Sigmoid colon (tissue), 7 donors: ENCODE measurements at regions of chr11 and their contacts with region 1.

Region 1: DNA sequence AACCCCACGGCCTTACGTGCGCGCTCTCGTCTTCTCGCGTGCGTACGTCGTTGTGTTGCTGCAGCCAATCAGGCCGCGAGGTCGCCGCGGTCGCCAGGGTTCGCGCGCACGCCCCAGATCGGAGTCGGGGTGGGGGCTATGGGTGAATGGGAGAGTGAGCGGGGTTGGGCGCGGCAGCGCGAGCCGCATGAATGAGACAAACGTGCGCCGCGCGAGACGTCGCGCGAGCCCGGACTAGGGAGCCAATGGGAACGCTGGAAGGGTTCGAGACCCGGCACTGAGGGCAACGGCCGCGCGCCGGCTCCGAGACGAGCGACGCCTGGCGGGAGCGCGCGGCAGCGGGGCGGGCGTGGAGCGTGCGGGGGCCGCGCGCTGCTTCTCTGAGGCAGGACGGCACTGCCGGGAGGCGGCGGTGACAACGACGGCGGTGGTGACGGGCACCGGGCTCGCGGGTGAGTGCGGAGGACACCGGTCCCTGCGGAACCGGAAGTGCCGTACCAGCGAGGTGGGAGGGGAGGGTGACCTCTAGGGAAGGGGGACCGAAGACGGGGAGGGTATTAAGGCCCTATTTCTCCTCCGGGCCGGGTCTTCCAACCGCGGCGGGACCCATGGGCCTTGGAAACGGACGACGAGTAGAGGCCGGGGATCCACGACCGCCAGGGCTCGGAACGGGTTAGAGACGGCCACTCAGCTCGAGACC is at the start of gene ZDHHC5:
- DNase-seq: peak; percentile 100
- H3K4me3 ChIP-seq: peak within 1 kb of the TSS; percentile 67 to 98 (median 84)
- H3K27ac ChIP-seq: peak within 1 kb of the TSS; percentile 92 to 99 (median 98)
- H3K4me1 ChIP-seq: peaks cover 0 to 30% (median 28%) of the 10 kb centered on the region in 4 donors
- H3K27me3 ChIP-seq: no peaks in the 10 kb centered on the region
- CTCF ChIP-seq: peak in 1 of 4 experiments; percentile 54
- EP300 ChIP-seq: no peak
- POLR2A ChIP-seq: peak; percentile 37 to 63
- total RNA-seq, gene ZDHHC5: 25.3 to 34.3 (median 28.1) TPM

Region 2: GRCh38 chr11:57324886-57325734 is 342.8 kb before region 1 on chr11 and contains the start of gene TNKS1BP1:
- intact Hi-C with region 1: loop called (anchors 5 kb)
- DNase-seq: peak; percentile 99
- H3K4me3 ChIP-seq: peak within 1 kb of the TSS; percentile 71 to 90 (median 86)
- H3K27ac ChIP-seq: peak within 1 kb of the TSS; percentile 89 to 97 (median 94)
- H3K4me1 ChIP-seq: peaks cover 0 to 51% (median 47%) of the 10 kb centered on the region in 4 donors
- H3K27me3 ChIP-seq: no peaks in the 10 kb centered on the region
- CTCF ChIP-seq: peak in 1 of 4 experiments; percentile 9
- EP300 ChIP-seq: no peak
- POLR2A ChIP-seq: peak; percentile 72 to 75
- total RNA-seq, gene TNKS1BP1: 26.4 to 51.2 (median 37.8) TPM

Region 3: GRCh38 chr11:57712256-57713150 is 44.6 kb after region 1 on chr11 and contains the start of gene TMX2:
- intact Hi-C with region 1: loop called (anchors 5 kb)
- DNase-seq: peak; percentile 97
- H3K4me3 ChIP-seq: peak within 1 kb of the TSS; percentile 96 to 98 (median 96)
- H3K27ac ChIP-seq: peak within 1 kb of the TSS; percentile 89 to 97 (median 92)
- H3K4me1 ChIP-seq: peaks cover 0 to 42% (median 36%) of the 10 kb centered on the region in 4 donors
- H3K27me3 ChIP-seq: no peaks in the 10 kb centered on the region
- CTCF ChIP-seq: no peak
- EP300 ChIP-seq: no peak
- POLR2A ChIP-seq: peak; percentile 23 to 34
- total RNA-seq, gene TMX2: 29.1 to 47.8 (median 40.7) TPM

Region 4: GRCh38 chr11:57761301-57762234 is 93.7 kb after region 1 on chr11 and contains the start of gene CTNND1:
- intact Hi-C with region 1: loop called (anchors 5 kb)
- DNase-seq: peak; percentile 97
- H3K4me3 ChIP-seq: peak within 1 kb of the TSS; percentile 58 to 63 (median 60)
- H3K27ac ChIP-seq: peak within 1 kb of the TSS; percentile 87 to 94 (median 90)
- H3K4me1 ChIP-seq: peaks cover 0 to 29% (median 28%) of the 10 kb centered on the region in 4 donors
- H3K27me3 ChIP-seq: no peaks in the 10 kb centered on the region
- CTCF ChIP-seq: no peak
- EP300 ChIP-seq: peak in 2 of 4 donors; percentile 13 to 28
- POLR2A ChIP-seq: peak; percentile 82 to 94
- total RNA-seq, gene CTNND1: 66.0 to 102 (median 86.9) TPM

Region 5: DNA sequence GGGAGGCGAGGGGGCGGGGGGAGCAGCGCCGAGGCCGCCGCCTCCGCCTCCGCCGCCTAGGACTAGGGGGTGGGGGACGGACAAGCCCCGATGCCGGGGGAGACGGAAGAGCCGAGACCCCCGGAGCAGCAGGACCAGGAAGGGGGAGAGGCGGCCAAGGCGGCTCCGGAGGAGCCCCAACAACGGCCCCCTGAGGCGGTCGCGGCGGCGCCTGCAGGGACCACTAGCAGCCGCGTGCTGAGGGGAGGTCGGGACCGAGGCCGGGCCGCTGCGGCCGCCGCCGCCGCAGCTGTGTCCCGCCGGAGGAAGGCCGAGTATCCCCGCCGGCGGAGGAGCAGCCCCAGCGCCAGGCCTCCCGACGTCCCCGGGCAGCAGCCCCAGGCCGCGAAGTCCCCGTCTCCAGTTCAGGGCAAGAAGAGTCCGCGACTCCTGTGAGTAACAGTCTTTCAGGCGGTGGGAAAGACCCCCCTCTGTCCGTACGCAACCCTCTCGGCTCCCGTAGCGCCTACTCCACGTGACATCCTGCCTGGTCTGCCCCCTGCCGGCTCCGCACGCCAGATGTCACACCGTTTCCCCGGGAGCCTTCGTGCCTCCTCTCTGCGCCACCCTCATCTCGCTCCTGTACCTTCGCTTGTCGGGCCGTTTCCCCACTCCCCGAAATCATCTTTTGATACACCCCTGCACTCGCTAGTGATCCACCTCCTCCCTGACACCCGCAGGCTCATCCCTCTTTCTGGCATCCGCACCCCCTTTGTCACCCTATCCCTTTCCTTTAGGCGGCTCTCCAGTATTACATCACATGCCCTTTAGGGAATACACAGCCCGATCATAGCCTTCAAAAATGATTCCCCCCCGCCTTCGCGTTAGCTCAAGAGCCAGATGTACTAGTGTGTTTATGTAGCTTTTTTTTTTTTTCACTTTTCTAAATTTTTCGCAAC is 911.6 kb after region 1 on chr11:
- intact Hi-C with region 1: loop called (anchors 10 kb)
- DNase-seq: peak; percentile 97
- H3K4me3 ChIP-seq: peak overlapping the region; percentile 89 to 100 (median 99)
- H3K27ac ChIP-seq: peak overlapping the region; percentile 98 to 100 (median 100)
- H3K4me1 ChIP-seq: peaks cover 0 to 73% (median 62%) of the 10 kb centered on the region in 4 donors
- H3K27me3 ChIP-seq: no peaks in the 10 kb centered on the region
- CTCF ChIP-seq: peak; percentile 81 to 96 (median 91)
- EP300 ChIP-seq: peak in 2 of 4 donors; percentile 24 to 59
- POLR2A ChIP-seq: peak; percentile 64 to 68

Region 6: GRCh38 chr11:59615637-59616395 is 1947.9 kb after region 1 on chr11 and contains the start of gene OSBP:
- intact Hi-C with region 1: loop called (anchors 5 kb)
- DNase-seq: peak; percentile 100
- H3K4me3 ChIP-seq: peak within 1 kb of the TSS; percentile 75 to 88 (median 86)
- H3K27ac ChIP-seq: peak within 1 kb of the TSS; percentile 92 to 97 (median 94)
- H3K4me1 ChIP-seq: peaks cover 0 to 43% (median 33%) of the 10 kb centered on the region in 4 donors
- H3K27me3 ChIP-seq: no peaks in the 10 kb centered on the region
- CTCF ChIP-seq: no peak
- EP300 ChIP-seq: no peak
- POLR2A ChIP-seq: peak in 1 of 2 donors; percentile 61
- total RNA-seq, gene OSBP: 27.5 to 41.5 (median 30.0) TPM